H1 (cell line): ENCODE measurements at regions of chr11 and their contacts with region 1.

Region 1: DNA sequence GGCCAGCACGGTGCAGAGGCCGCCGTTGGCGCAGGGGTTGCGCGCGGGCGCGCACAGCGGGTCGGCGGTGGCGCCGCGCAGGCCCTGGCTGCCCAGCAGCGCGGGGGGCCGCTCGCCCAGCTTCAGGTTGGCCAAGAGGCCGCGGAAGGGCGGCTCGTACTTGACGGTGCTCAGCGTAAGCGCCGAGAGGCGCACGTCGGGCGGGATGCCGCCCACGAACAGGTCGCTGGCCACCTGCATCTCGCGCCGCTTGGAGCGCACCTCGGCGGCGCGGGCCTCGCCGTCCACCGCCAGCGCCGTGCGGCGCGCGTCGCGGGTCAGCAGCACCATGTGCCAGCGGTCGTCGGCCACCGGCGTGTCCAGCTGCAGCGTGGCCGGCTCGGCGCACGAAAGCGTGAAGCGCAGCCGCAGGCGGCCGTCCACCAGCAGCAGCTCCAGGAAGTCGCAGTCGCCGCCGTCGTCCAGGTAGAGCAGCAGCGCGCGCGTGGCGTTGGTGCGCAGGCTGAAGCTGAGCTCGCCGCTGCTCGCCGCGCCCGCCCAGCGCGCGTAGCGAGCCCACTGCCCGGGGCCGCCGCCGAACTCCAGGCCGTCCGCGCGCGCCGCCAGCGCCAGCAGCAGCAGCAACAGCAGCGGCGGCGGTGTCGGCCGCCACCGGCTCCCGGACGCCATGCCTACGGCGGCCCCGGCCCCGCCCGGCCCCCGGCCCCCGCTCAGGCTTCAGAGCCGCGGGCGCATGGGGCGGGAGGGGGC is 9.8 kb downstream of the NRXN2 start:
- DNase-seq: no peak
- H3K4me3 ChIP-seq: peak overlapping the region; percentile 28 to 55 (median 42)
- H3K27ac ChIP-seq: no peak overlapping the region
- H3K4me1 ChIP-seq: peaks cover 12 to 28% (median 20%) of the 10 kb centered on the region in 4 experiments
- H3K27me3 ChIP-seq: peaks cover 12 to 49% (median 33%) of the 10 kb centered on the region in 4 experiments
- CTCF ChIP-seq: no peak
- EP300 ChIP-seq: no peak
- POLR2A ChIP-seq: no peak
- RAD21 ChIP-seq: no peak

Region 2: DNA sequence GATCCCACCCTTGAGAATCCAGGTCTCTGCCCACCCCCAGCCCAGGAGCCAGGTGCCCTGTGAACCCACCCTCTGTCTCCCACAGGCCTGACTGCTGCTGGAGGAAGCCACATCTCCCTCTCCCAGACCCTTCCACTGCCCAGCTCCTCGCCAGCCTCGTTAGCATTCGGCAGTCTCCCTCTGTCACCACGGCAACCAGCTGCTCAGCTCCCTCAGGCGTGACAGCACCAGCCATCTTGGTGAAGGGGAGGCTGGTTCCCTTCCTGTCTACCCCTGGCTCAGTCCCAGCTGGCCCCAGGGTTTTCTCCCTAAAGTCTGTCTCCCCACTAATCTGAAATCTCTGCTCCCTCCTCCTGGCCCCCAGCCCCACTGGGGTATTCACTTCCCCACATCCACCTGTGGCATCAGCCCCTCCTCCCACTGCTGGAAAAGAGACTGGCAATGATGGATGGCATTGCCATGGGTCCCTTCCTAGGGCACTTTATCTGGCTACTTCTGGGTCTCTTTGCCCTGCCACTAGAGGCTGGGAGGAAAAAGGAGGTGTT is 18.3 kb before region 1 on chr11:
- CTCF ChIA-PET with region 1: interaction called, 29 read pairs
- POLR2A ChIA-PET with region 1: interaction called, 10 read pairs
- DNase-seq: peak in 1 of 2 experiments; percentile 74
- H3K4me3 ChIP-seq: no peak overlapping the region
- H3K27ac ChIP-seq: no peak overlapping the region
- H3K4me1 ChIP-seq: no peaks in the 10 kb centered on the region; a peak in 3 of 7 replicates
- H3K27me3 ChIP-seq: peaks cover 0 to 4% (median under 1%) of the 10 kb centered on the region in 4 experiments; a peak in 3 of 7 replicates
- CTCF ChIP-seq: no peak
- EP300 ChIP-seq: no peak
- POLR2A ChIP-seq: no peak
- RAD21 ChIP-seq: no peak

Region 3: GRCh38 chr11:64703048-64703447 is 10.2 kb before region 1 on chr11:
- CTCF ChIA-PET with region 1: interaction called, 27 read pairs
- POLR2A ChIA-PET with region 1: interaction called, 10 read pairs
- DNase-seq: no peak
- H3K4me3 ChIP-seq: no peak overlapping the region
- H3K27ac ChIP-seq: no peak overlapping the region
- H3K4me1 ChIP-seq: peaks cover 0 to 3% (median 2%) of the 10 kb centered on the region in 4 experiments; a peak in 3 of 7 replicates
- H3K27me3 ChIP-seq: 0 out of 7 replicates have a peak, but pooled peaks cover 0 to 2% (median 0%) of the 10 kb centered on the region in 4 experiments
- CTCF ChIP-seq: no peak
- EP300 ChIP-seq: no peak
- POLR2A ChIP-seq: no peak
- RAD21 ChIP-seq: no peak

Region 4: DNA sequence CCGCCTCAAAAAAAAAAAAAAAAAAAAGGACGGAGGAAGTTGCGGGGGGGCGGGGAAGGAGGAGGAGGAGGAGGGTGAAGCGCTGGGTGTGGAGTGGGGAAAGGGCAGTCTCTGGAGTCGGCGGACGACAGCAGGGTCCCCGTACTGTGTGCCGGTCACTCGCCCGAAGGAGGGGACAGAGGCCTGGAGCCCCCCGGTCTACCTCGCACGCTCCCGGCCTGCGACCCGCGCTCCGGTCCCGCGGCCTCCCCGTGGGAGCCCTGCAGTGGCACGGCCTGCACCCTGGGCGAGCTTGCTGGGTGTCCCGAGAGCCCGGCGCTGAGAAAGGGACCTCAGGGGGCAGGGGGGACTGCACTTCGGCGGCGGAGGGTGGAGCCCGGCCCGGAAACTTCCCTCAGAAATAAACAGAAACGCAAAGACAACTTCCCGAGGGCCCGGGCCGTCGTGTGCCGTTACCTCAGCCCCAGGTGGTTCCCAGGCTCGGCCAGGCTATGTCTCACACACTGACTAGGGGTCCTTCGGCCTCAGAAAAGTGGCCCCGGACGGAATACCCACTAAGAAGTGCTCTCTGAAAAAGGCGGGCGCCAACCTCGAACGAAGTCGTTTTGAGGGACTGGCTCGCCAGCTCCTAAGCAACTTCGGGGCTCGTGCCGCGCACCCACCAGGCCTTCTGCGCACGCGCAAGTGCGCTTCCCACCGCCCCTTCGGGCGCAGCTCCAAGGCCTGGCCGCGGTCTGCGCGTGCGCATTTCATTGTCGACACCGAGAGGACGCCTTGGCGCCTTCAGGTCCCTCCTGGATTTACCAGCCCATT is 258.4 kb after region 1 on chr11 and contains the start of gene MAJIN:
- CTCF ChIA-PET with region 1: no interaction called
- POLR2A ChIA-PET with region 1: no interaction called
- DNase-seq: peak; percentile 71 to 89
- H3K4me3 ChIP-seq: no peak within 1 kb of the TSS; a peak in 1 of 8 replicates
- H3K27ac ChIP-seq: no peak within 1 kb of the TSS
- H3K4me1 ChIP-seq: no peaks in the 10 kb centered on the region
- H3K27me3 ChIP-seq: peaks cover 0 to 12% (median 7%) of the 10 kb centered on the region in 4 experiments; a peak in 5 of 7 replicates
- CTCF ChIP-seq: no peak
- EP300 ChIP-seq: no peak
- POLR2A ChIP-seq: no peak
- RAD21 ChIP-seq: no peak
- total RNA-seq, gene MAJIN: not detected in 2 replicates